ENCODE measurements at regions of chr1 and their contacts with region 1.

Region 1: DNA sequence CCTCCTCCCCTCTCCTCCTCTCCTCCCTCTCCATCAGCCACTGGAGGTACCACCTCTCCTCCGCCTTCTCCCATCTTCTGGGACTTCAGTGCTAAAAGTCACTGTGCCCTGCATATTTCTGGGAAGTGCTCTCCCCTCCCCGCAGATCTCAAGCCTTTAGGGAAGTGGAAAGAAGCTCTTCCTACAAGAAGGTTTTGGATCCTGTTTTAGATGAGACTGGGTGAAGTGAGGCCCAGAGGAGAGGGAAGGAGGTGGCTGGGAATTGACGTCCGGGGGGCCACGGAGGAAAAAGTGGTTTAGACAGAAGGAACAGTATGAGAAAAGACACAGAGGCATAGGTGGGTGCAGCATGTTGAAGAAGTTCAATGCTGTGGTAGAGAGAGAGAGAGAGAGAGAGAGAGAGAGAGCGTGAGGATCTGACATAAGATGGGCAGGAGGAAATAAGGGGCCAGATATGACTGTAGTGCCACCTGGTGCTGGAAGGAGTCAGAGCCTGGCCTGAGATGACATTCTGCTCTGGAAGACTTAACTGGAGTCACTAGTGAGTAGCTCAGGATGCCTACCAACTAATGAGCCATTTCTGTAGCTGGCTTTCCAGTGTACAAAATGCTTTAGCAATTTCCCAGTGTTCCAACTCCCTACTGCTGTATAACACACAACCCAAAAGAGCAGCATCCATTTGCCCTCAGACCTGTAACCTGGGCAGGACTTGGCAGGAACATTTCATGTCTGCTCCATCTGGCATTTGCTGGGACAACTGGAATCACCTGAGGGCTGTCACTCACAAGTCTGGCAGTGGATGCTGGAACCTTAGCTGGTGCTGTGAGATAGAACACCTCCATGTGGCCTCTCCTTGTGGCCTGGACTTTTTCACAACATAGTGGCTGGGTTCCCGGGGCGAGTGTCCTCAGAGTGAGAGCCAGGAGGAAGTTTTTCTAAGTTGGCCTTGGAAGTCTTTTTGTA is 16.6 kb upstream of the ZSCAN20 start:
- DNase-seq: peak; percentile 77
- H3K4me3 ChIP-seq: no peak overlapping the region
- CTCF ChIP-seq: peak; percentile 87

Region 2: DNA sequence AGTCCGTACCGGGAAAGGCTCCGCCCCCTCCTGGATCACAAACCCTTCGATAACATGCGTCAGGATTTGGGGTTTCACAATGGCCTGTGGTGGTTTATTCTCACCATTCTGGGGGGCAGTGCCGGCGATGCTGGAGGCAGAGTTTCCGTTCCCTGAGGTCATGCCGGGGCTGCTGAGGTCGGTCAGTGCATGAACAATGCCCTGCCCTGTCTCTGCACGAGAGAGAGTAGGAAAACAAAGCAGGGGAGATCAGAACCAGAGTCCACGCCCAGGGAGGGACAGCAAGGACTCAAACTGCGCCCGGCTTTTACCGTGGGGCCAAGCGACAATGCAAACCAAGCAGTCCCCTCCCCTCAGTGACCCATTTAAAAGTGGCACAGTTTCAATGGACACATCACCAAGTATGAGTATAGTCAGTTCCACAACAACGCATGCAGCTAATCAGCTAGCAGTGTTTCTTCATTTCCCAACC is 121.7 kb before region 1 on chr1:
- CTCF ChIA-PET with region 1: interaction called, 14 read pairs
- POLR2A ChIA-PET with region 1: no interaction called
- DNase-seq: no peak
- H3K4me3 ChIP-seq: no peak overlapping the region
- CTCF ChIP-seq: no peak

Region 3: GRCh38 chr1:33361532-33362235 is 94.1 kb before region 1 on chr1:
- CTCF ChIA-PET with region 1: interaction called, 15 read pairs
- POLR2A ChIA-PET with region 1: no interaction called
- DNase-seq: no peak
- H3K4me3 ChIP-seq: no peak overlapping the region
- CTCF ChIP-seq: no peak

Region 4: DNA sequence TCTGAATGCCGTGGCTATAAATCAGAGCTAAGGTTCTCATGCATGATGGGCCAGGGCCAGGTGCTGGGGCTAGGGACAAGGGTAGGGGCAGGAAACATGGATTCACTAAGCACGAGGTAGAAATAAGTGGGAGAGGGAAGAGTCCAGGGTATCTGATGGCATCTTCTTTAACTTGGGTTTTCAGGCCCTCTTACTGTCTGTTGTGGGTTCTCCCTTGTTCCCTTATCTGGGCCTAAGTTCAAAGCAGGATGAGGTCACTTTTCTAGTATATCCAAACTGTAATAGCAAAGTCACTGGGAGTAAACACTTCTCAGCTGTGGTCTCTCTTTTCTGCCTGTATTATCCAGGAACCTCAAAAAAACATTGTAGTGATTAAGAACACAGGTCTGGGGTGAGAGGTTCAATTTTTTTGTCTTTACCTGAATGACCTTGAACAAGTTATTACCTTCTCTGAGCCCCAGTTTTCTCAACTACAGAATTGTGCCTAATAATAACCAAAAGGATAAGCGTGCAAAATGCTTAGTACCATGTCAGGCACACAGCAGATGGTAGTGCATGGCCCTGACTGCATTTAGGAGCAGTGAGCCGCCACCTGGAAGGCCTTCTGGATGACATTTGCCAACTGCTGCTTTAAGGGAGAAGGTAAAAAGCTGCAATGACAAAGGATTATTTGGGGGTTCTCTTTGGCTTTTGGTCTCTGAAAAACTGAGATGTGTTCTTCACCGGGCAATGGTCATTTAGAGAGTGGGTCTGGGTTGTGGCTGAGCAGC is 81.3 kb before region 1 on chr1:
- CTCF ChIA-PET with region 1: interaction called, 29 read pairs
- POLR2A ChIA-PET with region 1: no interaction called
- DNase-seq: no peak
- H3K4me3 ChIP-seq: no peak overlapping the region
- CTCF ChIP-seq: no peak

Region 5: GRCh38 chr1:33420870-33421775 is 34.7 kb before region 1 on chr1:
- CTCF ChIA-PET with region 1: interaction called, 10 read pairs
- POLR2A ChIA-PET with region 1: no interaction called
- DNase-seq: no peak
- H3K4me3 ChIP-seq: no peak overlapping the region
- CTCF ChIP-seq: no peak

Region 6: DNA sequence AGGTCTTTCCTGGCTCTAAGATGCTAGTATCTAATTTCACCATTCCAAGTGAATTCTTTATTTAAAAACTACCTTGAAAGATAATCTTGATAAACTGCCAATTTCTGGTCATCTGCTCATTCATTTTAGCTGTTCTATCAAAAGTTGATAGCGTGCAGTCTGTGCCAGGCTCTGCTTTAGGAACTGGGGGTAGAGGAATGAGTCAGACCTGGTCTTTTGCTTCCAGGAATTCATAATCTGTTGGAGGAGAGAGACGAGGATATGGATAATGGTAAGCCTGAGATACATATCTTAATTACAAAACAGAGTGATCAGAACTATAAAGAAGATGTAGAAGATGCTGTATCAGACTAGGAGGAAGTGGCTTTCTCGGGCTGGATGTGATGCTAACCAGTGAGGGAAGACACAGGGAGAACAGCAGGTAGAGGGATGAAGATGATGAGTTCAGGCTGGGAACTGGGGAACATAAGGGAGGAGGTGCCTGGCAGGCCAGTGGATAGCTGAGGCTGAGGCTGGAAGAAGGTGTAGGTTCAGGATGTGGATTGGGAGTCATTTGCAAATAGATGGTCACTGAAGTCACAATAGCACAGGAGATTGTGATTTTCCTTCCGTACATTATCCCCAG is 12.6 kb before region 1 on chr1:
- CTCF ChIA-PET with region 1: interaction called, 124 read pairs
- POLR2A ChIA-PET with region 1: no interaction called
- DNase-seq: no peak
- H3K4me3 ChIP-seq: no peak overlapping the region
- CTCF ChIP-seq: no peak